Activated T-helper 1 cell treated with anti-CD3 and anti-CD28 coated beads, Interleukin-12 subunit alpha, Interleukin-12 subunit beta, Interleukin-2, Interleukin-4 antibody, amounts not matched to agents 30 ng/mL and 10 ng/mL and 1 ng/mL, durations not matched to agents 14 hours and 24 hours and 36 hours (primary cell): ENCODE measurements at regions of chr2 and their contacts with region 1.

Region 1: GRCh38 chr2:203014456-203015199 is at the start of gene NBEAL1:
- DNase-seq: peak; percentile 97
- H3K4me3 Mint-ChIP-seq: peak within 1 kb of the TSS; percentile 94
- H3K27ac Mint-ChIP-seq: peak within 1 kb of the TSS; percentile 87
- H3K4me1 Mint-ChIP-seq: peaks cover 31% of the 10 kb centered on the region
- H3K27me3 Mint-ChIP-seq: peaks cover 4% of the 10 kb centered on the region
- total RNA-seq, gene NBEAL1: 9.2 and 10.7 TPM in 2 replicates

Region 2: GRCh38 chr2:202870431-202871299 is 144.0 kb before region 1 on chr2:
- intact Hi-C with region 1: loop called (anchors 1 kb)
- DNase-seq: peak; percentile 32
- H3K4me3 Mint-ChIP-seq: peak overlapping the region; percentile 90
- H3K27ac Mint-ChIP-seq: peak overlapping the region; percentile 76
- H3K4me1 Mint-ChIP-seq: peaks cover 14% of the 10 kb centered on the region
- H3K27me3 Mint-ChIP-seq: peaks cover 8% of the 10 kb centered on the region

Region 3: GRCh38 chr2:202989749-202990148 is 24.9 kb before region 1 on chr2:
- intact Hi-C with region 1: no loop called
- DNase-seq: no peak
- H3K4me3 Mint-ChIP-seq: no peak overlapping the region
- H3K27ac Mint-ChIP-seq: no peak overlapping the region
- H3K4me1 Mint-ChIP-seq: no peaks in the 10 kb centered on the region
- H3K27me3 Mint-ChIP-seq: no peaks in the 10 kb centered on the region

Region 4: DNA sequence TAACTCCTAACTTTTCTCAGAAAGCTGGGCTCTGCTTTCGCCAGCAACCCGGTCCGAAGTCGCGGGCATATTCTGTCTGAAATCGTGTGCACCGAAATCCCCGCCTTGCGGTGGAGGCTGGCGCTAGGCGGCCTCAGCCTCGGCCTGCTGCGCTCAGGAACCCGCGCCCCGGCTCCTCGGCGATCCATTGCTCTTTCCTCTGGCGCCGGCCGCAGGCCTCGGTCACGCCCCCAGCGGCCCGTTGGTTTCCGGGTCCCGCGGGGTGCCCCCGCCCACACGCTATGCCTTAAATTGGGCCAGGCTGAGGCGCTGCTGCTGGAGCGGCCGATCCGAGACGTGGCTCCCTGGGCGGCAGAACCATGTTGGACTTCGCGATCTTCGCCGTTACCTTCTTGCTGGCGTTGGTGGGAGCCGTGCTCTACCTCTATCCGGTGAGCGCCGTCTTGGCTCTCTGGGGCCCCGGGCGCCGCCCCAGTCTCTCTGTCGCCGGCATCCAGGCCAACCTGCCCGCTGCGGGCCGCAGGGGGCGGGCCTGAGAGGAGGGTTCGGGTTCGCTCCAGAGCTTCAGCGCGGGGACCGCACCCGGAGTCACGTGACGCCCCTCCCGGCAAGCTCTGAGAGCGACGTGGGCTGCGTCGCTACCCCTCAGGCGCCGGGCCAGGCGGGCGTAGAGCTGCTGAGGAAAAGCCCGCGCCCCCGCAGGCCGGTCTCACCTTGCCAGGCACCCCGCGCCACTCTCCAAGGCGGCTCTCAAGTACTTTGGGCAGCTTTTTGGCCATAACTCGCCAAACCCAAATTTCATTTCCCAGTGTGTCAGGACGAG is 224.3 kb after region 1 on chr2 and contains the start of gene CYP20A1:
- intact Hi-C with region 1: loop called (anchors 1 kb)
- DNase-seq: peak; percentile 97
- H3K4me3 Mint-ChIP-seq: peak within 1 kb of the TSS; percentile 94
- H3K27ac Mint-ChIP-seq: peak within 1 kb of the TSS; percentile 98
- H3K4me1 Mint-ChIP-seq: peaks cover 26% of the 10 kb centered on the region
- H3K27me3 Mint-ChIP-seq: no peaks in the 10 kb centered on the region
- total RNA-seq, gene CYP20A1: 23.1 and 26.0 TPM in 2 replicates

Region 5: GRCh38 chr2:203453858-203454451 is 439.3 kb after region 1 on chr2:
- intact Hi-C with region 1: loop called (anchors 10 kb)
- DNase-seq: no peak
- H3K4me3 Mint-ChIP-seq: no peak overlapping the region
- H3K27ac Mint-ChIP-seq: no peak overlapping the region
- H3K4me1 Mint-ChIP-seq: peaks cover 4% of the 10 kb centered on the region
- H3K27me3 Mint-ChIP-seq: no peaks in the 10 kb centered on the region

Region 6: GRCh38 chr2:204127238-204127637 is 1112.6 kb after region 1 on chr2:
- intact Hi-C with region 1: loop called (anchors 10 kb)
- DNase-seq: no peak
- H3K4me3 Mint-ChIP-seq: no peak overlapping the region
- H3K27ac Mint-ChIP-seq: no peak overlapping the region
- H3K4me1 Mint-ChIP-seq: peaks cover 19% of the 10 kb centered on the region
- H3K27me3 Mint-ChIP-seq: peaks cover 11% of the 10 kb centered on the region